ENCODE measurements at regions of chr4 and their contacts with region 1.

Region 1: GRCh38 chr4:110510955-110511544 is 35.1 kb downstream of the ENPEP start:
- DNase-seq: peak; percentile 68
- H3K4me3 Mint-ChIP-seq: no peak overlapping the region
- H3K27ac Mint-ChIP-seq: no peak overlapping the region
- H3K4me1 Mint-ChIP-seq: no peaks in the 10 kb centered on the region
- H3K27me3 Mint-ChIP-seq: no peaks in the 10 kb centered on the region
- CTCF ChIP-seq: peak; percentile 84

Region 2: GRCh38 chr4:110310795-110311194 is 200.3 kb before region 1 on chr4:
- CTCF ChIA-PET with region 1: interaction called, 36 read pairs
- POLR2A ChIA-PET with region 1: no interaction called
- intact Hi-C with region 1: loop called (anchors 1 kb)
- DNase-seq: no peak
- H3K4me3 Mint-ChIP-seq: no peak overlapping the region
- H3K27ac Mint-ChIP-seq: no peak overlapping the region
- H3K4me1 Mint-ChIP-seq: no peaks in the 10 kb centered on the region
- H3K27me3 Mint-ChIP-seq: no peaks in the 10 kb centered on the region
- CTCF ChIP-seq: no peak

Region 3: GRCh38 chr4:110344162-110344561 is 166.9 kb before region 1 on chr4:
- CTCF ChIA-PET with region 1: interaction called, 43 read pairs
- POLR2A ChIA-PET with region 1: no interaction called
- intact Hi-C with region 1: loop called (anchors 1 kb)
- DNase-seq: peak; percentile 22
- H3K4me3 Mint-ChIP-seq: no peak overlapping the region
- H3K27ac Mint-ChIP-seq: no peak overlapping the region
- H3K4me1 Mint-ChIP-seq: no peaks in the 10 kb centered on the region
- H3K27me3 Mint-ChIP-seq: peaks cover 5% of the 10 kb centered on the region
- CTCF ChIP-seq: peak; percentile 18

Region 4: DNA sequence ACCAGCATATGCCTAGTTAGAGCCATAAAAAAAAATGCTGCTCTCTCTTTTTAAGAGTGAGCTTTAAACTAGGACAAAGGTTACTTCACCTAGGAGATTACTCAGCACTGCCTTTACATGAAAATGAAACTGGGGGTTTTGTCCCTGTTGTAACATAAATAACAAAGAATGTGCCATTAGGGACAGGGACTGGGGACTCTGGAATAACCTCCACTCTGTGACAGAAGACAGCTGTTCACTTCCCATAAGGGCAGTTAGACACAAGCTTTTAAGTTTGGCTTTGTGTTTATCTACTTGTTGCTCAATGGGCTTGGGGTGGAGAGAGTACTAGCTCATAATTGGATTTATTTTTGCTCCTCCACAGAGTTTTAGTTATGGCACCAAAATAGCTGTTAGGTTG is 23.2 kb before region 1 on chr4:
- CTCF ChIA-PET with region 1: interaction called, 10 read pairs
- POLR2A ChIA-PET with region 1: no interaction called
- intact Hi-C with region 1: no loop called
- DNase-seq: peak; percentile 35
- H3K4me3 Mint-ChIP-seq: no peak overlapping the region
- H3K27ac Mint-ChIP-seq: no peak overlapping the region
- H3K4me1 Mint-ChIP-seq: peaks cover 10% of the 10 kb centered on the region
- H3K27me3 Mint-ChIP-seq: no peaks in the 10 kb centered on the region
- CTCF ChIP-seq: no peak

Measured in MCF 10A (cell line).